Vagina (tissue), 2 donors: ENCODE measurements at regions of chr5 and their contacts with region 1.

Region 1: DNA sequence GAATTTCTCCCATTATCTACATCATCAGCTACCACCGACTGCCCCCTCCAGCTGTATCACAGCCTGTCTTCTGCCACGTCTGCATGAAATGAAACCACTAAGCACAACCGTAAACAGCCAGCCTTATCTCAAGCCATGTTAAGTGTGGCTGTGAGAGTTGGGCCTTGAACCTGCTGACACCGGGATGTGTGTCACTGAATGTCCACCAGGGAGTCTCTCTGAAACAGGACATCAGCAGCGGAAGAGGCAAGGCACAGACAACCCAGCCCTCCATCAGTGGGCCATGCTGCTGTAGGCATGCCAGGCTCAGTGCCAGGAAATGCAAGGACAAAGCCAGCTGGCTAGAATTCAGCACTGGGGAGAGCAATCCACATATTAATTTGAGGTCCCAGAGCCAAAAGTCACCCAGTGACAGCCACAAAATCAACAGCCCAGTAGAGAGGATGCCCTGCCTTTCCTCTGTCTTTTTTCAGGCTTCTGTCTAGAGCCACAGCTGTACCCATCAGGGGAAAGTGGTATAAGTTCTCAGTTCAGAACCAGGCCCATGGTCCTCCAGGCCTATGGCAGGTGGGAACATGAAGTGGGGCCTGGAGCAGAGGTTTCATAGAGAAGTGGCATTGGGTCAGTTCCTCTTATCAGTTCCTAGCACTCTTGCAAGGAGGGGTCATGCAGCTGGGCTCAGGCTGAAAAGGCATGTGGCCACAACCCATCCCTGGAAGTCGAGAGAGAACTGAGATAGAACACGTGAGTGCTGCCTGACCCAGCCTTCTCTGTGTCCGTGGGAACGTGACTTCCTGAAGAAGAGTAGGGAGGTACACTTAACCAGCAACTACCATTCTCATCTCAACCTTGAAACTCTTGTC is 199.4 kb downstream of the ESM1 start:
- DNase-seq: no peak
- H3K4me3 ChIP-seq: no peak overlapping the region
- H3K27ac ChIP-seq: no peak overlapping the region
- H3K4me1 ChIP-seq: no peaks in the 10 kb centered on the region
- H3K27me3 ChIP-seq: no peaks in the 10 kb centered on the region
- CTCF ChIP-seq: no peak
- POLR2A ChIP-seq: no peak

Region 2: GRCh38 chr5:52837068-52837467 is 1948.9 kb before region 1 on chr5:
- intact Hi-C with region 1: loop called (anchors 5 kb)
- DNase-seq: no peak
- H3K4me3 ChIP-seq: no peak overlapping the region
- H3K27ac ChIP-seq: peak overlapping the region; percentile 58
- H3K4me1 ChIP-seq: peaks cover 5% of the 10 kb centered on the region
- H3K27me3 ChIP-seq: no peaks in the 10 kb centered on the region
- CTCF ChIP-seq: no peak
- POLR2A ChIP-seq: no peak

Region 3: GRCh38 chr5:53318303-53318702 is 1467.7 kb before region 1 on chr5:
- intact Hi-C with region 1: no loop called
- DNase-seq: no peak
- H3K4me3 ChIP-seq: no peak overlapping the region
- H3K27ac ChIP-seq: no peak overlapping the region
- H3K4me1 ChIP-seq: no peaks in the 10 kb centered on the region
- H3K27me3 ChIP-seq: no peaks in the 10 kb centered on the region
- CTCF ChIP-seq: no peak
- POLR2A ChIP-seq: no peak